ENCODE measurements at regions of chr20 and their contacts with region 1.

Region 1: GRCh38 chr20:38472513-38473372 is at the start of gene RALGAPB:
- DNase-seq: peak; percentile 98
- H3K4me3 Mint-ChIP-seq: peak within 1 kb of the TSS; percentile 82
- H3K27ac Mint-ChIP-seq: peak within 1 kb of the TSS; percentile 86
- H3K4me1 Mint-ChIP-seq: peaks cover 40% of the 10 kb centered on the region
- H3K27me3 Mint-ChIP-seq: peaks cover 2% of the 10 kb centered on the region
- total RNA-seq, gene RALGAPB: 31.1 to 36.7 TPM

Region 2: GRCh38 chr20:38201356-38201755 is 271.4 kb before region 1 on chr20:
- CTCF ChIA-PET with region 1: no interaction called
- POLR2A ChIA-PET with region 1: no interaction called
- DNase-seq: no peak
- H3K4me3 Mint-ChIP-seq: no peak overlapping the region
- H3K27ac Mint-ChIP-seq: no peak overlapping the region
- H3K4me1 Mint-ChIP-seq: no peaks in the 10 kb centered on the region
- H3K27me3 Mint-ChIP-seq: peaks cover 23% of the 10 kb centered on the region

Region 3: DNA sequence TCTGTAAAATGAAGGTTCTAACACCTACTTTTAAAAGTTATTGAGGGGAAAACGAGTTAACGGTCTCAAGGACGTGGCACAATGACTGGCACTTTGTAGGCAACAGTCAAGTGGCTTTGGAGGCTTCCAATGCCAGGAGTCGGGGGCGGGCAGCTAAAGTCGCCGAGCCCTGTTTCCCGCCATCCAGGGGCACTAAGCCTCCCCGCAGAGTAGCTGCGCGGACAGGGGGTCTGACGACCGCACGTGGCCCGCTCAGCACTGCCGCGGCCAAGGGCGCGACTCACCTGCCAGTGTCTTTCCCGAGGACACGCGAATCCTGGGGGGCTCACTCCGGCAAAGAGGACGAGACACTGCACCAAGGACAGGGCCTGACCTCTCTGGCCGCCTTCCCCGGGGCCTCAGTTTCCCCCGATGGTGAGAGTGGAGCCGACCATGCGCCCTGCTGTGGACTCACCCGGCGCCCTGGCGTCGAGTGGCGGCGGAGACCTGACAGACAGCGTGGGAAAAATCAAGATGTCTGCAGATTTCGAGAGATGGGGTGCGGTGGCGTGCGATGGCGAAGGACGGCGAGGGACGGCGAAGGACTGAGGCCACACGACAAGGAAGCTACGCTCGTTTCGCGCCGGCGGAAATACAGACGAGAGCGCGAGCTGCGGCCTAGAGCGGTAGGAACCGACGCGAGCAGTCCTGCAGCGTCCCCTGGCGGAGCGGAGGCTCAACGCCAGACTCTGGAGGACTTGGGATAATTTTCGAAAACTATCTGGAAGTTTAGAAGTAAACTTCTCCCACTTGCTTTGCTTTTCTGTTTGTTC is 37.8 kb before region 1 on chr20 and contains the start of gene SNHG17:
- CTCF ChIA-PET with region 1: interaction called, 24 read pairs
- POLR2A ChIA-PET with region 1: no interaction called
- DNase-seq: peak; percentile 90
- H3K4me3 Mint-ChIP-seq: peak within 1 kb of the TSS; percentile 82
- H3K27ac Mint-ChIP-seq: peak within 1 kb of the TSS; percentile 91
- H3K4me1 Mint-ChIP-seq: peaks cover 39% of the 10 kb centered on the region
- H3K27me3 Mint-ChIP-seq: peaks cover 9% of the 10 kb centered on the region
- total RNA-seq, gene SNHG17: 40.7 to 40.8 TPM

Measured in activated CD4-positive, alpha-beta T cell treated with anti-CD3 and anti-CD28 coated beads, Interleukin-2, amount 10 ng/mL, durations not matched to agents 7 days and 5 days (primary cell).